GM13976 (cell line): ENCODE measurements at regions of chr1 and their contacts with region 1.

Region 1: DNA sequence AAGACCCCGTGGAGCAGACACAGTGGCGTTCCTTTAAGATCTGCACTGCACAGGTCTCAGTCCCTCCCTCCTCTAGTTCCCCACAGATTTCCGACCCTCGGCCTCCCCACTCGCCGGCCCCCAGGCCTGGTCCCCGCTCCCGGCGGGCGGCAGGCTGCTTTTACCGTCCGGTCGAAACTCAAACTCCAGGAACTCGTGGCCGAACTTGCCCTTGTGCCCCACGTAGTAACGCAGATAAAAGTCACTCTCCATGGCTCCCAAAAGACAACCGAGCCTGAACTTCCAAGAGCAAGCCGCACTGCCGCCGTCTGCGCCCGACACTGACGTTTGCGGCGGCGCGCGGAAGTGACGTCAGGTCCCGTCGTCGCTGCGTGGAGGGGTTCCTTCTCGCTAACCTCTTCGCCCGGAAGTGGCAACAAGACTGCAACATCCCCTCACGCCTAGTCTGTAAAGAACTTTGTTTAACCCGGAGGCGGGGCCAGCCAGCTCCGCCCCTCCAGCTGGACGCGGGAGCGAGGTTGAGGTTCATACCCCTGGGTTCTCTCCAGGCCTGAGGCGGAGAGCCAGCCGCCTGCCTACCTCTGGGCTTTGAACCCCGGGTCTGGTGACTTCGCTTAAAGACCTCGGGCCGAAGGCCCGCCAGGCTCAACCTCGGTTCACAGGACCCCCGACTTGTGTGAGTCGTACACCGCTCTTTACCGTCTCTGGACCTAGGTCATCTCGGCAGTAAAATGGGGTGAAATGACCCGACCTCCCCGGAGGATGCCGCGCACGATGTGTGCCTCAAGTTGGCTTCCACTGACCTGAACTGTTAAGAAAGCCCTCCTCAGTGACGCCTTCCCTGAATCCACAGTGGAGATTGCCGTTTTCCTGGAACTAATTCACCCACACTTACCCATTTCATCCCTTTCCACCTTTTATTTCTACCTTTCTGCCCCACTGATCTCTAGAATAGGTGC is at the start of gene MAGOH:
- DNase-seq: peak; percentile 99
- CTCF ChIP-seq: no peak

Region 2: DNA sequence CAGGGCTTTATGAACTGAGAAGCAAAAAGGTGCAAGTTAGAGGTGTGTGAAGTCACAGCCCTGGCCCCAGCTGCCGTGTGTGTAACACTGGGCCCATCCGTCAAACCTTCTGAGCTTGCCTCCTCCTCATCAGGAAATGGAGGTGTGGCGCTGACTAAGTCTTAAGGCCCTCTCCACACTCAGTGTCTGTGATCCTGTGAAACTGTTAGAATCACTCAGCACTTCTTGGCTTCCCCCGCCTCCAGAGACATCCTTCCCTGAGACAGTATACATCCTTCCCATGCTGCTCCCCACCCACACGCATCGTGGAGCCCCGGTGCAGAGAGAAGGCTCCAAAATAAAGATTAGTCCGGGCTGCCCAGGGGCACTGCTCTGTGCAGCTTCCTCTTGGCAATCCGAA is 56.1 kb after region 1 on chr1:
- in situ Hi-C with region 1: loop called (anchors 10 kb)
- DNase-seq: peak; percentile 67
- CTCF ChIP-seq: no peak

Region 3: GRCh38 chr1:53705446-53706096 is 467.1 kb after region 1 on chr1:
- in situ Hi-C with region 1: no loop called
- DNase-seq: no peak
- CTCF ChIP-seq: no peak